ENCODE measurements at regions of chr6 and their contacts with region 1.

Region 1: DNA sequence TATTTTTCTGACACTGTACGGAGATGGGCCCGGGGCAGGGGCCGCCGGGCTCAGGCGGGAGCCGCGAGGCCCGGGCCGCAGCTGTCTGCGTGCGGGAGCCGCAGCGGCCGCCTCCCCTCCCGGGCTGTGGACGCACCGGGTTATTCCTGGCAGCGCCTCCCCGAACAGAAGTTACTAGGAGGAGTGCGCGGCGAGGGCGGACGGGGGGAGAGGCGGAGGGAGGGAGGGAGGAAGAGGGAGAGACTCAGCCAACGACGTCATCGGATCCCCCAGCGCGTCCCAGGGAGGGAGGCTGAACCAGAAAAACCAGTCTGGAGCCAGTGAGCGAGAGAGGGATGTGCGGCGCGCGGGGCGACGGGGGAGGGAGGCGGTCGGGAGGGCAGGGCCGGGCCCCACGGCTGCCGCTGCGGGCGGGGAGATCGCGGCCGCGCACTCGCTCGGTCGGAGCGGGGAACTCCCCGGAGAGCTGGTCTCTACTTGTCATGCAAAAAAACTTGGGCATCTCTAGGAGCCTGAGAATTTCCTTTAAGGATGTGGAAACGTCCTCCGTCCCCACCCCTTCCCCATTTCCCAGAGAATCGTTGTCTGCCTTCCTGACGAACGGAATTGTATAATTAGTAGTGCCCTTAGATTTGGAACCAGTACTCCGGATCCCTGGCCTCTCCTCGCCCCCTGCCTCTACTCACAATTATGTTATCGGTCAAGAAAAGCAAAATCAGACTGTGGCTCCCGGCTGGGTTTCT is 1.4 kb upstream of the HIVEP2 start:
- DNase-seq: peak; percentile 77
- H3K4me3 ChIP-seq: peak overlapping the region; percentile 94
- H3K27ac ChIP-seq: peak overlapping the region; percentile 95
- H3K4me1 ChIP-seq: peaks cover 30% of the 10 kb centered on the region
- CTCF ChIP-seq: no peak

Region 2: GRCh38 chr6:142692942-142693341 is 253.4 kb before region 1 on chr6:
- CTCF ChIA-PET with region 1: no interaction called
- POLR2A ChIA-PET with region 1: interaction called, 3 read pairs
- intact Hi-C with region 1: loop called (anchors 2 kb)
- DNase-seq: peak; percentile 70
- H3K4me3 ChIP-seq: no peak overlapping the region
- H3K27ac ChIP-seq: no peak overlapping the region
- H3K4me1 ChIP-seq: no peaks in the 10 kb centered on the region
- CTCF ChIP-seq: peak; percentile 98

Region 3: GRCh38 chr6:142913511-142914047 is 32.8 kb before region 1 on chr6:
- CTCF ChIA-PET with region 1: no interaction called
- POLR2A ChIA-PET with region 1: interaction called, 5 read pairs
- intact Hi-C with region 1: loop called (anchors 1 kb)
- DNase-seq: peak; percentile 88
- H3K4me3 ChIP-seq: peak overlapping the region; percentile 16
- H3K27ac ChIP-seq: peak overlapping the region; percentile 76
- H3K4me1 ChIP-seq: peaks cover 27% of the 10 kb centered on the region
- CTCF ChIP-seq: peak; percentile 66

Region 4: GRCh38 chr6:142935553-142936517 is 10.5 kb before region 1 on chr6:
- CTCF ChIA-PET with region 1: no interaction called
- POLR2A ChIA-PET with region 1: interaction called, 10 read pairs
- intact Hi-C with region 1: no loop called
- DNase-seq: peak; percentile 66
- H3K4me3 ChIP-seq: peak overlapping the region; percentile 33
- H3K27ac ChIP-seq: peak overlapping the region; percentile 61
- H3K4me1 ChIP-seq: peaks cover 93% of the 10 kb centered on the region
- CTCF ChIP-seq: no peak

Region 5: GRCh38 chr6:143842902-143843676 is 896.7 kb after region 1 on chr6 and contains the start of gene LTV1:
- CTCF ChIA-PET with region 1: no interaction called
- POLR2A ChIA-PET with region 1: no interaction called
- intact Hi-C with region 1: loop called (anchors 10 kb)
- DNase-seq: peak; percentile 96
- H3K4me3 ChIP-seq: peak within 1 kb of the TSS; percentile 98
- H3K27ac ChIP-seq: peak within 1 kb of the TSS; percentile 58
- H3K4me1 ChIP-seq: peaks cover 13% of the 10 kb centered on the region
- CTCF ChIP-seq: no peak
- total RNA-seq, gene LTV1: 25.6 and 26.8 TPM in 2 replicates